Gastrocnemius medialis (tissue), 4 donors: ENCODE measurements at regions of chr21 and their contacts with region 1.

Region 1: GRCh38 chr21:44939532-44940115 is at the start of gene SLX9:
- DNase-seq: peak; percentile 61 to 69
- ATAC-seq: peak; percentile 87 to 90
- H3K4me3 ChIP-seq: peak within 1 kb of the TSS; percentile 71 to 95 (median 83)
- H3K27ac ChIP-seq: peak within 1 kb of the TSS; percentile 78 to 91 (median 84)
- H3K4me1 ChIP-seq: peaks cover 26 to 29% of the 10 kb centered on the region in 2 donors
- H3K27me3 ChIP-seq: no peaks in the 10 kb centered on the region
- CTCF ChIP-seq: no peak
- POLR2A ChIP-seq: peak; percentile 63 to 76
- total RNA-seq, gene SLX9: 23.7 to 37.6 (median 25.8) TPM

Region 2: DNA sequence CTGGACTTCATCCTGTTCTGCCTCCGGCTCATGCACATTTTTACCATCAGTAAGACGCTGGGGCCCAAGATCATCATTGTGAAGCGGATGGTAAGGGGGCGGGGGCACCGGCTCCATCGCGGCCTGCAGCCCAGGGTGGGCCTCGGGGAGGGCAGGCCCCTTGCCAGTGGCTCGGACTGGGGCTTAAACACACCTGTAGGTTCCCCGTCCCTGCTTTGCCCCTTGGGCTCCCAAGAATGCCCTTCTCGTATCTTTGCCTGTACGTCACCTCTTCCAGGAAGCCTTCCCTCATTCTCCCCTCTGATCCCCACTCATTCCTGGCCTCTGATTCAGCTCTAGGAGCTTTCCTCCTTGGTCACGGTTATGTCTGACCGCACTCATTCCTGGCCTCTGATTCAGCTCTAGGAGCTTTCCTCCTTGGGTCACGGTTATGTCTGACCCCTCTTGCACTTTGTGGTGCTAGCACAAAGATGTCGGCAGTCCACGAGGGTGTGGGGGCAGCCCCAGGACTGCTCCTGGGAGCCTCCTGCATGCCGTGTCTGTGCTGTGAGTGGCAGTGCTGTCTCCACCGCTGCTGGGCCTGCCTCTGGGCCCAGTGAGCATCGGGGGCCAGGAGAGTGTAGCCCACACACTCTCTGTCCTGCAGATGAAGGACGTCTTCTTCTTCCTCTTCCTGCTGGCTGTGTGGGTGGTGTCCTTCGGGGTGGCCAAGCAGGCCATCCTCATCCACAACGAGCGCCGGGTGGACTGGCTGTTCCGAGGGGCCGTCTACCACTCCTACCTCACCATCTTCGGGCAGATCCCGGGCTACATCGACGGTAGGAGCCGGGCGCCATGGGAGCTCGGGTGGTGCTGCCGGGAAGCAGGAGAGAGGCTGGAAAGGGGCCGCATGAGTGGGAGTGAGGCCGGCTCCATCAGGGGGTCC is 533.4 kb before region 1 on chr21:
- in situ Hi-C with region 1: no loop called
- intact Hi-C with region 1: no loop called
- DNase-seq: peak in 1 of 2 donors; percentile 7
- ATAC-seq: no peak
- H3K4me3 ChIP-seq: no peak overlapping the region
- H3K27ac ChIP-seq: no peak overlapping the region
- H3K4me1 ChIP-seq: no peaks in the 10 kb centered on the region
- H3K27me3 ChIP-seq: no peaks in the 10 kb centered on the region
- CTCF ChIP-seq: no peak
- POLR2A ChIP-seq: no peak

Region 3: DNA sequence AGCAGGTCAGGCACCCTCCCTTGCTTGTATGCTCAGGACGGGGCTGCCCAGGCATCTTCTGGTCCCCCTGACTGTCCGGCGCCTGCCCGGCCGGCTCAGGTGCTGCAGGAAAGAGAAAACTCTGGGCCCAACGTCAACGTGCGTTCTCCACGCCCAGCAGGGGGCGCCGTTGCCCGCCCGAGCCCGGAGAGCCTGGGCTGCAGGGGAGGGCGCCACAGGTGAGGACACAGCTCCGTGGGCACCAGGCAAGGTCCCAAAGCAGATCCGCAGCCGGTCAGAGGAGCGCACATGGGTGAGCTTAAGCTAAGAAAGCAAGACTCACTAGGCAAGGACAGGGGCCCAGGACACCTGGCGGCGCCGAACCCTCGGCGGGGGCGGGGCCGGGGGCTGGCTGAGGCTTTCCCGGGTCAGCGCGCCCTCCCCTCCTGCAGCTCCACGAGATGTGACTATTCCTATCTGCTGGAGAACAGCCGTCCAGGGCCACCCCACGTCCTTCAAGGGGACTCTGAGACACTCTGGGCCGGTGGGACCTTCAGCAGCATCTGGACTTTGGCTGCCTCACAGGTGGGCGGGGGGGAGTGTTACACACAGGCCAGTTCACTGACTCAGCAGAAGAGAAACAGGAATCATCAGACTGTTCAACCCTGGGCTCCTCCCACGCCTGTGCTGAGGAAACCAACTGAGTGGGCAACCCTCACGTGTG is 429.0 kb before region 1 on chr21:
- in situ Hi-C with region 1: no loop called
- intact Hi-C with region 1: loop called (anchors 10 kb)
- DNase-seq: no peak
- ATAC-seq: peak in 1 of 2 donors; percentile 46
- H3K4me3 ChIP-seq: no peak overlapping the region
- H3K27ac ChIP-seq: no peak overlapping the region
- H3K4me1 ChIP-seq: no peaks in the 10 kb centered on the region
- H3K27me3 ChIP-seq: peaks cover 20 to 37% (median 33%) of the 10 kb centered on the region in 3 donors
- CTCF ChIP-seq: peak; percentile 23 to 58 (median 50)
- POLR2A ChIP-seq: no peak

Region 4: GRCh38 chr21:44773287-44773966 is 166.2 kb before region 1 on chr21:
- in situ Hi-C with region 1: no loop called
- intact Hi-C with region 1: no loop called
- DNase-seq: no peak
- ATAC-seq: no peak
- H3K4me3 ChIP-seq: no peak overlapping the region
- H3K27ac ChIP-seq: no peak overlapping the region
- H3K4me1 ChIP-seq: no peaks in the 10 kb centered on the region
- H3K27me3 ChIP-seq: no peaks in the 10 kb centered on the region
- CTCF ChIP-seq: no peak
- POLR2A ChIP-seq: no peak

Region 5: GRCh38 chr21:44801468-44802395 is 137.9 kb before region 1 on chr21 and contains the start of gene UBE2G2:
- in situ Hi-C with region 1: loop called in 1 of 4 experiments (anchors 10 kb)
- intact Hi-C with region 1: loop called (anchors 2 kb)
- DNase-seq: peak; percentile 59 to 74
- ATAC-seq: peak; percentile 91 to 92
- H3K4me3 ChIP-seq: peak within 1 kb of the TSS; percentile 80 to 91 (median 89)
- H3K27ac ChIP-seq: peak within 1 kb of the TSS; percentile 86 to 95 (median 90)
- H3K4me1 ChIP-seq: peaks cover 23 to 39% of the 10 kb centered on the region in 2 donors
- H3K27me3 ChIP-seq: no peaks in the 10 kb centered on the region
- CTCF ChIP-seq: no peak
- POLR2A ChIP-seq: peak; percentile 87 to 91
- total RNA-seq, gene UBE2G2: 64.2 to 83.8 (median 73.3) TPM

Region 6: GRCh38 chr21:44994695-44995342 is 55.2 kb after region 1 on chr21:
- in situ Hi-C with region 1: no loop called
- intact Hi-C with region 1: no loop called
- DNase-seq: peak; percentile 33 to 85
- ATAC-seq: peak; percentile 24 to 79
- H3K4me3 ChIP-seq: no peak overlapping the region
- H3K27ac ChIP-seq: peak overlapping the region; percentile 29 to 74 (median 53)
- H3K4me1 ChIP-seq: peaks cover 13 to 14% of the 10 kb centered on the region in 2 donors
- H3K27me3 ChIP-seq: no peaks in the 10 kb centered on the region
- CTCF ChIP-seq: no peak
- POLR2A ChIP-seq: no peak